GM12878 (cell line): ENCODE measurements at regions of chr6 and their contacts with region 1.

Region 1: GRCh38 chr6:113879186-113880096 is 22.3 kb downstream of the MARCKS start:
- DNase-seq: peak; percentile 47
- ATAC-seq: peak; percentile 99
- H3K4me3 ChIP-seq: no peak overlapping the region
- H3K27ac ChIP-seq: no peak overlapping the region
- H3K4me1 ChIP-seq: no peaks in the 10 kb centered on the region
- H3K27me3 ChIP-seq: no peaks in the 10 kb centered on the region
- CTCF ChIP-seq: peak; percentile 83 to 89 (median 84)
- EP300 ChIP-seq: no peak
- POLR2A ChIP-seq: no peak
- RAD21 ChIP-seq: peak; percentile 97

Region 2: DNA sequence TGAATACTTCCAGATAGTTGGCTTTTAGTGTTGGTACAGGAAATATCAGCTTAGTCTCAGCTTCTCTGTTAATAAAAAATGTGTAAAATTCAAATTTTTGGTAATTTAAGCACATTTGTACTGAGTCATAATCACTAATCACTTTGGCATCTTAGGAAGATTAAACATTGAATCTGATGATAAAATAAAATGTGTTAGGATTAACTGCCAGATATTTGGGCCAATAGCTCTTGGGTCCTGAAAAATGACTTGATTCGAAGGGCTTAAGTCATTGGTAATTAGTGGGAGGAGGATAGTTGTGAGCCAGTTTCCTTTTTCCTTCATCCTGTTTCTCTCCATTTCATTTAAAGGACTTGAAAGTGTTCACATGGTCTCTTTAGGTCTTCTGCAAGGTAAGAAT is 1106.3 kb before region 1 on chr6:
- CTCF ChIA-PET with region 1: interaction called, 4 read pairs
- POLR2A ChIA-PET with region 1: no interaction called
- RAD21 ChIA-PET with region 1: interaction called, 26 read pairs
- SMC1A ChIA-PET with region 1: interaction called, 5 read pairs
- in situ Hi-C with region 1: loop called (anchors 10 kb)
- intact Hi-C with region 1: no loop called
- DNase-seq: no peak
- ATAC-seq: no peak
- H3K4me3 ChIP-seq: no peak overlapping the region
- H3K27ac ChIP-seq: no peak overlapping the region
- H3K4me1 ChIP-seq: no peaks in the 10 kb centered on the region
- H3K27me3 ChIP-seq: no peaks in the 10 kb centered on the region
- CTCF ChIP-seq: no peak
- EP300 ChIP-seq: no peak
- POLR2A ChIP-seq: no peak
- RAD21 ChIP-seq: no peak

Region 3: GRCh38 chr6:112879920-112880413 is 999.5 kb before region 1 on chr6:
- CTCF ChIA-PET with region 1: interaction called, 88 read pairs
- POLR2A ChIA-PET with region 1: no interaction called
- RAD21 ChIA-PET with region 1: interaction called, 35 read pairs
- SMC1A ChIA-PET with region 1: interaction called, 28 read pairs
- in situ Hi-C with region 1: no loop called
- intact Hi-C with region 1: loop called (anchors 5 kb)
- DNase-seq: no peak
- ATAC-seq: peak; percentile 98
- H3K4me3 ChIP-seq: no peak overlapping the region
- H3K27ac ChIP-seq: no peak overlapping the region
- H3K4me1 ChIP-seq: no peaks in the 10 kb centered on the region
- H3K27me3 ChIP-seq: no peaks in the 10 kb centered on the region
- CTCF ChIP-seq: peak in 2 of 3 experiments; percentile 31 to 50; a peak in 3 of 6 replicates
- EP300 ChIP-seq: no peak
- POLR2A ChIP-seq: peak; percentile 24; the same call in 1 of the 2 replicates
- RAD21 ChIP-seq: peak; percentile 18; the same call in 1 of the 2 replicates

Region 4: GRCh38 chr6:112946051-112946450 is 933.4 kb before region 1 on chr6:
- CTCF ChIA-PET with region 1: no interaction called
- POLR2A ChIA-PET with region 1: no interaction called
- RAD21 ChIA-PET with region 1: no interaction called
- SMC1A ChIA-PET with region 1: no interaction called
- in situ Hi-C with region 1: no loop called
- intact Hi-C with region 1: no loop called
- DNase-seq: no peak
- ATAC-seq: no peak
- H3K4me3 ChIP-seq: no peak overlapping the region
- H3K27ac ChIP-seq: no peak overlapping the region
- H3K4me1 ChIP-seq: no peaks in the 10 kb centered on the region
- H3K27me3 ChIP-seq: no peaks in the 10 kb centered on the region; a peak in 1 of 4 replicates
- CTCF ChIP-seq: no peak
- EP300 ChIP-seq: no peak
- POLR2A ChIP-seq: no peak
- RAD21 ChIP-seq: no peak

Region 5: DNA sequence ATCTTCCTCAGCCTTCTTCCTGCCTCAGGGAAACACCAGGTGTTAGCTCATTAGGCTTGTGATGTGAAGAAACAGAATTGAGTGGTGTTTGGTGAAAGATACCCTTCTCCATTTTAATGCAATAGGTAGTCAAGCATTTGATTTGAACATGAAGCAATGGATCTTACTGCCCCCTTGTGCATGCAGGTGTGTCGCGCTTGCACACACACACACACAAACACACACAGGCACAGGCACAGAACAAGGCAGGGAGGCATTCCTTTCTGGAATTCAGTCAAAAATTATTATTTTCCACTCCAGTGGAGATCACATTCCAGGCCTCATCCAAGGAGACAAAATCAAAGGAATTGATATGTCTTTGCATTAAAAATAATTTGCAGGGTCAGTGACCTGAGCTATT is 689.3 kb before region 1 on chr6:
- CTCF ChIA-PET with region 1: interaction called, 4 read pairs
- POLR2A ChIA-PET with region 1: no interaction called
- RAD21 ChIA-PET with region 1: interaction called, 3 read pairs
- SMC1A ChIA-PET with region 1: interaction called, 5 read pairs
- in situ Hi-C with region 1: loop called (anchors 10 kb)
- intact Hi-C with region 1: no loop called
- DNase-seq: no peak
- ATAC-seq: no peak
- H3K4me3 ChIP-seq: no peak overlapping the region
- H3K27ac ChIP-seq: no peak overlapping the region
- H3K4me1 ChIP-seq: no peaks in the 10 kb centered on the region
- H3K27me3 ChIP-seq: no peaks in the 10 kb centered on the region; a peak in 1 of 4 replicates
- CTCF ChIP-seq: no peak; a peak in 1 of 6 replicates
- EP300 ChIP-seq: no peak
- POLR2A ChIP-seq: no peak
- RAD21 ChIP-seq: no peak

Region 6: GRCh38 chr6:113287396-113287795 is 592.0 kb before region 1 on chr6:
- CTCF ChIA-PET with region 1: interaction called, 7 read pairs
- POLR2A ChIA-PET with region 1: no interaction called
- RAD21 ChIA-PET with region 1: interaction called, 4 read pairs
- SMC1A ChIA-PET with region 1: interaction called, 7 read pairs
- in situ Hi-C with region 1: no loop called
- intact Hi-C with region 1: loop called (anchors 5 kb)
- DNase-seq: peak; percentile 37
- ATAC-seq: peak; percentile 96
- H3K4me3 ChIP-seq: no peak overlapping the region
- H3K27ac ChIP-seq: no peak overlapping the region
- H3K4me1 ChIP-seq: no peaks in the 10 kb centered on the region
- H3K27me3 ChIP-seq: no peaks in the 10 kb centered on the region
- CTCF ChIP-seq: no peak
- EP300 ChIP-seq: 0 out of 4 replicates have a peak, but pooled peaks of 1 of the 2 experiments have one; percentile 20
- POLR2A ChIP-seq: no peak
- RAD21 ChIP-seq: no peak

Region 7: DNA sequence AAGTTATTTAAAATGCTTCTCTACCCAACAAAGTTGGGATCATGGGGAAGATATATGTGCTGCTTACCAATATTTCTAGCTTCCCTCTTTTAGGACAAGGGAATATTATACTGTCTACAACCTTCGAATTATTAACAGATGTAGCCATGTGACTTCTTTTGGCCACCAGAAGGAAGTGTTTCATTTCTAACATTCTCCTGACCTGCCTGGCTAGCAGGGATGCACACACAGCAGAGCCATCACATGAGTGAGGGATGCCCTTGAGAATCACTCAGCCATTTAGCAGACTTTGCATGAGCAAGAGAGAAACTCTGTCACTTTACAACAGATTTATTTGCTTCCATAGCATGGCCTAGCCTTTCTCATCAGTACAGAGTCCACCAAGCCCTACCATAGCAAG is 253.0 kb before region 1 on chr6:
- CTCF ChIA-PET with region 1: interaction called, 16 read pairs
- POLR2A ChIA-PET with region 1: no interaction called
- RAD21 ChIA-PET with region 1: interaction called, 21 read pairs
- SMC1A ChIA-PET with region 1: interaction called, 23 read pairs
- in situ Hi-C with region 1: no loop called
- intact Hi-C with region 1: no loop called
- DNase-seq: no peak
- ATAC-seq: peak; percentile 42
- H3K4me3 ChIP-seq: peak overlapping the region; percentile 25; the same call in 1 of the 2 replicates
- H3K27ac ChIP-seq: peak overlapping the region; percentile 100
- H3K4me1 ChIP-seq: peaks cover 68% of the 10 kb centered on the region
- H3K27me3 ChIP-seq: no peaks in the 10 kb centered on the region
- CTCF ChIP-seq: no peak; a peak in 1 of 6 replicates
- EP300 ChIP-seq: 0 out of 4 replicates have a peak, but pooled peaks of 1 of the 2 experiments have one; percentile 11
- POLR2A ChIP-seq: no peak
- RAD21 ChIP-seq: peak; percentile 39; the same call in 1 of the 2 replicates

Region 8: DNA sequence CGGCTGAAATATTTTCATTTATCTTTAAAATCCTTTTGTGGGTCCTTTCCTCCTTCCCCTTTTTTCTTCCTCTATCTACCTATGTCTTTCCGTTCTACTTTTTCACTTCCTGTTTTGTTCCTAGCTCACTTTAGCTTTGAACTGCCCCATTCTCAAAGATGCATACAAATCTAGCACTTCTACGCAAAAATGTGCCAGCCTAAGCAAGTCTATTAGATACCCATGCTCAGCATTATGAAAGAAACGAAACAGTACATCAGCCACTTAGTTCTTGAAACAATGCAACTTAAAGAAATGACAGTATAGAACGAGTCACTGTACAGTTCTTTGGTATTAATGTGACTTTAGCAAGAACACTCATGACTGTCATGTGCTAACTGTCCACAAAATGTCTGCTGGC is 69.6 kb before region 1 on chr6:
- CTCF ChIA-PET with region 1: no interaction called
- POLR2A ChIA-PET with region 1: no interaction called
- RAD21 ChIA-PET with region 1: no interaction called
- SMC1A ChIA-PET with region 1: no interaction called
- in situ Hi-C with region 1: no loop called
- intact Hi-C with region 1: no loop called
- DNase-seq: peak; percentile 73
- ATAC-seq: peak; percentile 78
- H3K4me3 ChIP-seq: no peak overlapping the region
- H3K27ac ChIP-seq: peak overlapping the region; percentile 43
- H3K4me1 ChIP-seq: peaks cover 23% of the 10 kb centered on the region
- H3K27me3 ChIP-seq: no peaks in the 10 kb centered on the region
- CTCF ChIP-seq: no peak
- EP300 ChIP-seq: peak in 1 of 2 experiments; percentile 75; a peak in 2 of 4 replicates
- POLR2A ChIP-seq: no peak
- RAD21 ChIP-seq: no peak

Region 9: DNA sequence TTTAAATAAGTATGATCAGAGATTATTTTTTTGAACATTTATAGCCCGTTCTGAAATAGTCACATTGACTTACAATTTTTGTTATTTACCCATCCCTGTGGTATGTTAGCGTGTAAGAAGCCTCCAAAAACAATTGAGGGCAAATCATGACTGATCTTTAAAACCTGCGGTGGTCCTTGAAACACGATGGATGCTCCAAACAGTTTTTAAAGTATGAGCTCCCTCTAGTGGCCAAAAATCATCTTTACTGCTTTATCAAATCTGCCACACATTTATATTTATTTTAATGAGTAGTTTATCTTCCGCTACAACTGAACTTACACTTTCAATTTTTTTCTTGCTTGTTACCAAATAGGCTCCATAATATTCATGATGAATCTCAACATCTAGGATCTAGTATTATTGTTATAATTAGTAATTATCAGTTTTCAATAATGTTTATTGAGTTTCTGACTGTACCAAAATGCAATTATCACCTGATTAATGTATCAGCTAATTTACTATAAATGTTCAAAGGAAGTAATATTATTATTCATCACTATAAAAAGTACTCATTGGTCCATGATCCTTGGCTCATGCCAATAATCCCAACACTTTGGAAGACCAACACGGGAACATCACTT is 29.9 kb after region 1 on chr6:
- CTCF ChIA-PET with region 1: interaction called, 19 read pairs
- POLR2A ChIA-PET with region 1: no interaction called
- RAD21 ChIA-PET with region 1: interaction called, 10 read pairs
- SMC1A ChIA-PET with region 1: interaction called, 9 read pairs
- in situ Hi-C with region 1: no loop called
- intact Hi-C with region 1: no loop called
- DNase-seq: peak; percentile 7
- ATAC-seq: peak; percentile 84
- H3K4me3 ChIP-seq: no peak overlapping the region
- H3K27ac ChIP-seq: no peak overlapping the region
- H3K4me1 ChIP-seq: no peaks in the 10 kb centered on the region
- H3K27me3 ChIP-seq: no peaks in the 10 kb centered on the region
- CTCF ChIP-seq: peak; percentile 44 to 76 (median 50); a peak in 5 of 6 replicates
- EP300 ChIP-seq: no peak
- POLR2A ChIP-seq: no peak
- RAD21 ChIP-seq: peak; percentile 84